Mammary epithelial cell (primary cell): ENCODE measurements at regions of chr16 and their contacts with region 1.

Region 1: GRCh38 chr16:14523632-14524031 is 106.4 kb downstream of the PARN start:
- DNase-seq: no peak
- H3K4me3 ChIP-seq: no peak overlapping the region
- H3K27ac ChIP-seq: no peak overlapping the region
- H3K4me1 ChIP-seq: peaks cover 11% of the 10 kb centered on the region
- H3K27me3 ChIP-seq: no peaks in the 10 kb centered on the region
- CTCF ChIP-seq: no peak

Region 2: GRCh38 chr16:14315683-14316320 is 207.8 kb before region 1 on chr16:
- CTCF ChIA-PET with region 1: no interaction called
- dilution Hi-C with region 1: loop called (anchors 5 kb)
- in situ Hi-C with region 1: no loop called
- intact Hi-C with region 1: no loop called
- DNase-seq: no peak
- H3K4me3 ChIP-seq: no peak overlapping the region
- H3K27ac ChIP-seq: no peak overlapping the region
- H3K4me1 ChIP-seq: peaks cover 4% of the 10 kb centered on the region
- H3K27me3 ChIP-seq: no peaks in the 10 kb centered on the region
- CTCF ChIP-seq: no peak

Region 3: GRCh38 chr16:14427371-14427948 is 96.2 kb before region 1 on chr16:
- CTCF ChIA-PET with region 1: no interaction called
- dilution Hi-C with region 1: loop called (anchors 5 kb)
- in situ Hi-C with region 1: no loop called
- intact Hi-C with region 1: no loop called
- DNase-seq: peak; percentile 32
- H3K4me3 ChIP-seq: no peak overlapping the region
- H3K27ac ChIP-seq: no peak overlapping the region
- H3K4me1 ChIP-seq: no peaks in the 10 kb centered on the region
- H3K27me3 ChIP-seq: no peaks in the 10 kb centered on the region
- CTCF ChIP-seq: no peak

Region 4: DNA sequence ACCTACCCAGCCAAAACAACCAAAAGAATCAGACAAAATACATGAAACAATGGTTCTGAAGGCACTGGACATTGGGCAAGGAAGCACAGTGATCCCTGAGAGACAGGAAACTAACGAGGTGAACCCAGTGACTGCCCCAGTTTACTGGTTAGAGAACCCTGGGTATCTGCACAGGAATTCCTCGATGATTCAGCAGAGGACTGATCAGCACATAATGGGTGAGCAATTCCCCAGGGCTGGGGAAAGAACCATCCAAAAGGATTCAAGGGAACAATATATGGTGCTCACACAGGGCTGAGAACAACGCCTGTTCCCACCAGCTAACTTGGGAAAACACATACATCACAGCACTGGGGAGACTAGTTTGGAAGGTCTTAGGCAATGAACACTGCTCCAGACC is 60.8 kb before region 1 on chr16:
- CTCF ChIA-PET with region 1: no interaction called
- dilution Hi-C with region 1: no loop called
- in situ Hi-C with region 1: no loop called
- intact Hi-C with region 1: no loop called
- DNase-seq: peak; percentile 73
- H3K4me3 ChIP-seq: no peak overlapping the region
- H3K27ac ChIP-seq: no peak overlapping the region
- H3K4me1 ChIP-seq: peaks cover 6% of the 10 kb centered on the region
- H3K27me3 ChIP-seq: no peaks in the 10 kb centered on the region
- CTCF ChIP-seq: no peak